CD8-positive, alpha-beta memory T cell (primary cell): ENCODE measurements at regions of chr10 and their contacts with region 1.

Region 1: DNA sequence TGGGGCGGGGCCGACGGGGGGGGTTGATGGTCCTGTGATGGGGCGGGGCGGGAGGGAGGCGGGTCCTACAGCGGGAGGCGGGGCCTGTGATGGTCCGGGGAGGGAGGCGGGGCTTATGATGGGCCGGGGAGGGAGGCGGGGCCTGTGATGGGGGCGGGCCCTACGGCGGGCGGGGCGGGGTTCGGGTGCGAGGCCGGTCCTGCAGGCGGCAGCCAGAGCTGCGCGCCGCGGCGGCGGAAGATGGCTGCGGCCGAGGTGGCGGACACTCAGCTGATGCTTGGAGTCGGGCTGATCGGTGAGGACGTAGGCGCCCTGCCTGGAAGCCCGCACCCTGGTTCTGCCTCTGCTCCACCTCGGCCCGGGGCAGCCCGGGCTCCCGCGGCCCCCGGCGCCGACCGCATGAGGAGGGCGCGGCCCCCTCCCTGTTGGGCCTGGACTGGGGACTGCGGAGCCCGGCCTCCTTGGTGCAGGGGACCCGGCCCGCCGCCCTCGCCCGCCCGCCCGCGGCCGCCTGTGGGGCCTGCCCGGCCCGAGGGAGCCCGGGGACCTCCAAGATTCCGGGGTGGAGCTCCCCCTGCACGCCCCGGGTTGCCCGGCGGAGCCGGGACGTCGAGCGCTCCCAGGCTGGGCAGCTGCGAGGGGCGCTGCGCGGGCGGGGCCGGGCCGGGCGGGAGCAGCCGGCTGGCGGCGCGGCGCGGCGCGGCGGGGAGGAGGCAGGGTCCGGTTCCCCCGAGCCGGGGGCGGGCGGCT is at the start of gene DENND10:
- DNase-seq: peak; percentile 62 to 81 (median 72)
- H3K4me3 ChIP-seq: peak within 1 kb of the TSS; percentile 51
- H3K4me3 Mint-ChIP-seq: peak within 1 kb of the TSS; percentile 77 to 88 (median 82)
- H3K27ac ChIP-seq: no peak within 1 kb of the TSS
- H3K27ac Mint-ChIP-seq: peak within 1 kb of the TSS; percentile 30 to 95 (median 80)
- H3K4me1 ChIP-seq: peaks cover 16% of the 10 kb centered on the region
- H3K4me1 Mint-ChIP-seq: peaks cover 14 to 46% (median 38%) of the 10 kb centered on the region in 3 donors
- H3K27me3 ChIP-seq: no peaks in the 10 kb centered on the region
- H3K27me3 Mint-ChIP-seq: no peaks in the 10 kb centered on the region
- total RNA-seq, gene DENND10: 23.8 to 24.8 TPM

Region 2: GRCh38 chr10:118341791-118342637 is 762.1 kb before region 1 on chr10 and contains the start of gene FAM204A:
- CTCF ChIA-PET with region 1: no interaction called
- POLR2A ChIA-PET with region 1: no interaction called
- DNase-seq: peak; percentile 92 to 99 (median 96)
- H3K4me3 ChIP-seq: peak within 1 kb of the TSS; percentile 85
- H3K4me3 Mint-ChIP-seq: peak within 1 kb of the TSS; percentile 88 to 99 (median 91)
- H3K27ac ChIP-seq: peak within 1 kb of the TSS; percentile 78
- H3K27ac Mint-ChIP-seq: peak within 1 kb of the TSS; percentile 86 to 99 (median 96)
- H3K4me1 ChIP-seq: peaks cover 35% of the 10 kb centered on the region
- H3K4me1 Mint-ChIP-seq: peaks cover 49 to 68% (median 68%) of the 10 kb centered on the region in 3 donors
- H3K27me3 ChIP-seq: no peaks in the 10 kb centered on the region
- H3K27me3 Mint-ChIP-seq: peaks cover 0 to 2% of the 10 kb centered on the region in 2 donors
- total RNA-seq, gene FAM204A: 66.3 to 71.6 TPM

Region 3: DNA sequence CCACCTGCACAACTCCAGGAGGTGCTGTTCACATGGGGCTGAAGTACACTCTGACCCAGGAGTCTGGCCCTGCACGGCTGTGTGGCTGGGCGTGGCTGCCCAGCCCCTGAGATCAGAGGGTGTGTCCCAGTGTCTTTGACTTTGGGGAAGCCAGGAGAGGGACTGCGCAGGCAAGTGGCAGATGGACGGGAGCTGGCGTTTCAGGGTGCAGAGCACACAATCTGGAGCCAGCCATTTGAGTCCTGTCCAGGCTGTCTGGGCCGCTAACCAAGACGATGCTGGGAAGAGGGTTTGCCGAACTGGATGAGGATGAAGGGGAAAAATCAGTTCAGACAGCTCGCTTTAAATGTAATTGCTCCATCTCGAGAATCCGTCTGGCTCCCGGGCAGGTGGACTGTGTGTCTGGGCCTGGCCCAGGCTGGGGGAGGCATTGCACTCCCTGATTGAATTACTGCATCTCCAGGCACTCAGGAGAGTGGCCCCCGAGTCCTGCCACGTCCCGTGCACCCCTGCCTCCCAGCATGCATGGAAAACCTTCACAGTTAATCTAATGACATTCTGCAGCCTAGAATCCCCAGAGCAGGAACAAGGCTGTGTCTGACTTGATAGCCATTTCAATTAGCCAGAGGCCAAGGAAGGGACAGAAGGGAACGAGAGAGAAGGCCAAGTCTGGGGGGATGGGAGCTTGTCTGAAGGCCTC is 195.4 kb before region 1 on chr10:
- CTCF ChIA-PET with region 1: no interaction called
- POLR2A ChIA-PET with region 1: no interaction called
- DNase-seq: no peak
- H3K4me3 ChIP-seq: no peak overlapping the region
- H3K4me3 Mint-ChIP-seq: no peak overlapping the region
- H3K27ac ChIP-seq: no peak overlapping the region
- H3K27ac Mint-ChIP-seq: no peak overlapping the region
- H3K4me1 ChIP-seq: no peaks in the 10 kb centered on the region
- H3K4me1 Mint-ChIP-seq: no peaks in the 10 kb centered on the region
- H3K27me3 ChIP-seq: no peaks in the 10 kb centered on the region
- H3K27me3 Mint-ChIP-seq: peaks cover 14 to 19% of the 10 kb centered on the region in 2 donors

Region 4: DNA sequence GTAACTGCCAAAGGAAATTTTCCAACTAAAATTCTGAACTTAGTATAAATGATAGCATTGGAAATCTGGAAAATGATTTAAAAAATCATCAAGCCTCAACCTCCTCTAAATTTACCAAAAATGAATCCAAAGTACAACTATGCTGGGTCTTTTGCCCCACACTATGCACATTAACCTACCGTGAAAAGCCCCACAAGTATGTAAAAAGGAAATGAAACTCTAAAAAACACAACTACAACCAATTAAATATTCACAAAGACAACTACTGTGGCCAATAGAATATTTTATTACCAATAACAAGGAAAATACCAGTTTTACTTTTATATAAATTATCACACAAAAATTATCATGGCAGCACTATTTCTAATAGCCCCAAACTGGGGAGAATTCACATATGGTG is 42.7 kb before region 1 on chr10:
- CTCF ChIA-PET with region 1: no interaction called
- POLR2A ChIA-PET with region 1: no interaction called
- DNase-seq: no peak
- H3K4me3 ChIP-seq: no peak overlapping the region
- H3K4me3 Mint-ChIP-seq: no peak overlapping the region
- H3K27ac ChIP-seq: no peak overlapping the region
- H3K27ac Mint-ChIP-seq: peak overlapping the region in 4 of 8 donors; percentile 28 to 78 (median 50)
- H3K4me1 ChIP-seq: no peaks in the 10 kb centered on the region
- H3K4me1 Mint-ChIP-seq: peaks cover 20 to 43% (median 39%) of the 10 kb centered on the region in 3 donors
- H3K27me3 ChIP-seq: no peaks in the 10 kb centered on the region
- H3K27me3 Mint-ChIP-seq: no peaks in the 10 kb centered on the region

Region 5: GRCh38 chr10:119080521-119081260 is 23.4 kb before region 1 on chr10 and contains the start of gene EIF3A:
- CTCF ChIA-PET with region 1: interaction called, 5 read pairs
- POLR2A ChIA-PET with region 1: interaction called, 21 read pairs
- DNase-seq: peak; percentile 87 to 93 (median 90)
- H3K4me3 ChIP-seq: peak within 1 kb of the TSS; percentile 95
- H3K4me3 Mint-ChIP-seq: peak within 1 kb of the TSS; percentile 92 to 100 (median 94)
- H3K27ac ChIP-seq: peak within 1 kb of the TSS; percentile 88
- H3K27ac Mint-ChIP-seq: peak within 1 kb of the TSS; percentile 95 to 99 (median 98)
- H3K4me1 ChIP-seq: peaks cover 28% of the 10 kb centered on the region
- H3K4me1 Mint-ChIP-seq: peaks cover 46 to 62% (median 51%) of the 10 kb centered on the region in 3 donors
- H3K27me3 ChIP-seq: no peaks in the 10 kb centered on the region
- H3K27me3 Mint-ChIP-seq: peaks cover 0 to 5% of the 10 kb centered on the region in 2 donors
- total RNA-seq, gene EIF3A: 181 to 195 TPM

Region 6: DNA sequence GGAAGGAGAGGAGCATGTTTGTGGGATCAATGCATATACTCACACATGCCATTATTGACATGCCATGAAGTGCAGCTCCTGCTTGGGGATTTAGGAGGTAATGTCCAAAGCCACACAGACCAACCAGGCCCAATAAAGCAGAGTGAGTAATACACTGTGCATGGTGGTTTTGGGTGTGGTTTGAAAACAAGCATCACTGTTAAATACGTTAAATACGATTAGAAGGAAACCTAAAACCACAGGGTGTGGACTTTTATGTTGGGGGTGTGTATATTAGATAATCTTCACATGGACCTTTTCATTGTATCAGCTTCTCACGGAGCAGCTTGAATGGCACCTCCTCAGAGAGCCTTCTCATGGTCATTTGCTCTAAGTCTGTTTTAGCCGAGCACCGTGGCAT is 13.1 kb before region 1 on chr10:
- CTCF ChIA-PET with region 1: interaction called, 14 read pairs
- POLR2A ChIA-PET with region 1: interaction called, 20 read pairs
- DNase-seq: peak in 4 of 5 donors; percentile 25 to 78 (median 56)
- H3K4me3 ChIP-seq: peak overlapping the region; percentile 31
- H3K4me3 Mint-ChIP-seq: peak overlapping the region; percentile 56 to 90 (median 81)
- H3K27ac ChIP-seq: peak overlapping the region; percentile 65
- H3K27ac Mint-ChIP-seq: peak overlapping the region; percentile 95 to 99 (median 98)
- H3K4me1 ChIP-seq: peaks cover 46% of the 10 kb centered on the region
- H3K4me1 Mint-ChIP-seq: peaks cover 47 to 54% (median 50%) of the 10 kb centered on the region in 3 donors
- H3K27me3 ChIP-seq: no peaks in the 10 kb centered on the region
- H3K27me3 Mint-ChIP-seq: no peaks in the 10 kb centered on the region